ENCODE measurements at regions of chr12 and their contacts with region 1.

Region 1: DNA sequence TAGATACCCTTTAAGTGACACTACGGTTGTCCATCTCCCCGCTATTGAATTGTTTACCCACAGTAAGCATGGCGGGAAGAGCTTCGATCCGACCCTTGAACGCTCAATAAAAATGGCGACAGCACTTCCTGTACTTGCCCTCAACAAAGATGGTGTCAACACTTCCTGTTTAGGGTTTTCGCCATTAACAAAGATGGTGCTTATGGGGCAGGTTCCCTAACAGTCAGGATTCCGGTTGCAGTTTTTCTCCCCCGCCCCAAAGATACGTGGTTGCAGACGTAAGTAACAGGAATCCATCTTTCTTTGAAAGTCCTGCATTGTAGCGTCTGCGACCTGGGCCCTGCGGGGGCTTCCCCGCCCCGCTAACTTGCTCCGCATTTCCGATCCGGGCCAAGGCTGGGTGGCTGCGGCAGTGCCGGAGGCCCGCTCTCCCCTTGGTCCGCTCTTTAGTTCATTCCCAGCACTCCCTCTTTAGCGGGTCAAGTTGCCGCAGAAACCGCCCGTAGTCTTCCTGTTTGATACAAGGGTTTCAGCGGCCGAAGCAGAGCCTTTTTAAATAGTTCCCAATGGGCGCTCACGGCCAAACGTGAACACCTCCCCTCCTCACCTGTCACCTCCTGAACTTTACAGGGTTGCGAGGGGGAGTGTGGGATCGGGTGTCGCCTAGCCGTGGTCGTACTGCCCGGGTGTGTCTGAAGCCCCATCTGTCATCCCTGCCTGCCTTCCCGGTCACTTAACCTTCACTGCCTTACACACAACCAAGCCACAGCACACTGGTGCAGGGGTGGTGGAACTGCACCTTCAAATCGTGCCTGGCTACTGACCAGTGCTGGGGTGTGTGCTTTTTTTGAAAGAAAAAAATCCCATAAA is at the start of gene CRADD:
- DNase-seq: peak; percentile 95
- H3K4me3 ChIP-seq: peak within 1 kb of the TSS; percentile 67 to 84 (median 75)
- H3K27ac ChIP-seq: peak within 1 kb of the TSS; percentile 93 to 97 (median 95)
- H3K4me1 ChIP-seq: peaks cover 19 to 40% (median 29%) of the 10 kb centered on the region in 4 donors
- H3K27me3 ChIP-seq: no peaks in the 10 kb centered on the region
- CTCF ChIP-seq: peak in 1 of 3 experiments; percentile 19
- EP300 ChIP-seq: no peak
- POLR2A ChIP-seq: no peak
- total RNA-seq, gene CRADD: 23.5 to 35.3 (median 26.1) TPM

Region 2: DNA sequence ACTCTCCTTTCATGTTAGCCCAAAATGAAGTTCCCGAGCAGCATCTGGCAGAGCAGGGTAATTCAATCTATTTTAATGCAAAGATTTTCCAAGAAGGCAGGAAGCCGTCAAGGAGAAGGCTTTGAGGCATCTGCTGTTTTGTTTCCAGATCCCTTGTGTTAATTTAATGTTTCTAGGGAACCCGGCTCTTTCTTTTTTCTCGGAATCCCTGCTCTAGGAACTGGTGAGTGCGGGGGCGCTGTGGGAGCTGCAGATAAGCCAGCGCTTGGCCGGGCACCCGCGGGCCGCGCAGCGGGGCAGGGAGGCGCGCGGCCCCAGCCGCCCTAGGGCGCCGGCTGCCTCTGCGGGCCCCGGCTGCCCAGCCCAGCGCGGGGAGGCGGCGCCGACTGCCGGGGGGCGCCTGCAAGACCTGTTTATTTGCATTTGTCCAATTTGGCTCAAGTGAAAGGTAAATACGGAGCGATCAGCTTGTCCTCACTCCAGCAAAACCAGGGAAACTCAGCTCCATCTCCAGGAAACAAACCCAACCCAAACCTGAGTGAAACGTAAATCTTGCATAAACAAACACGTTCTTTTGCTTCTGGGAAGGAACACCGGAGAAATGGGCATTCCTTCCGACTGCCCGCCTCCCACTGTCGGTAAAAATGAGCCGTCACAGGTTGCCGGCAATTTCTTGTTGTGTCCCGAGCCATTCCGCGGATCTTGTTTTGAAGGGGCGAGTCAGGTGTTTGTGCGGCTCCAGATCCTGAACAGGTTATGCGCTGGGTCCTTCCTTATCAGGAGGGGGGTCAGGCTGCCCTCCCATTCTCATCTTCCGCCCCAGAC is 64.9 kb after region 1 on chr12:
- intact Hi-C with region 1: loop called (anchors 2 kb)
- DNase-seq: no peak
- H3K4me3 ChIP-seq: peak overlapping the region; percentile 57 to 67 (median 66)
- H3K27ac ChIP-seq: peak overlapping the region; percentile 82 to 89 (median 88)
- H3K4me1 ChIP-seq: peaks cover 31 to 63% (median 59%) of the 10 kb centered on the region in 4 donors
- H3K27me3 ChIP-seq: no peaks in the 10 kb centered on the region
- CTCF ChIP-seq: peak in 2 of 3 experiments; percentile 46 to 64
- EP300 ChIP-seq: peak; percentile 92
- POLR2A ChIP-seq: no peak

Region 3: GRCh38 chr12:93813972-93814821 is 136.8 kb after region 1 on chr12:
- intact Hi-C with region 1: loop called (anchors 5 kb)
- DNase-seq: peak; percentile 95
- H3K4me3 ChIP-seq: peak overlapping the region in 3 of 4 donors; percentile 8 to 28 (median 17)
- H3K27ac ChIP-seq: peak overlapping the region; percentile 82 to 89 (median 86)
- H3K4me1 ChIP-seq: peaks cover 55 to 81% (median 79%) of the 10 kb centered on the region in 4 donors
- H3K27me3 ChIP-seq: no peaks in the 10 kb centered on the region
- CTCF ChIP-seq: peak in 1 of 3 experiments; percentile 19
- EP300 ChIP-seq: peak; percentile 85
- POLR2A ChIP-seq: peak; percentile 8